ENCODE measurements at regions of chr3 and their contacts with region 1.

Region 1: GRCh38 chr3:155701882-155702465 is 42.9 kb downstream of the PLCH1 start:
- DNase-seq: no peak
- H3K4me3 ChIP-seq: no peak overlapping the region
- CTCF ChIP-seq: no peak
- POLR2A ChIP-seq: no peak

Region 2: DNA sequence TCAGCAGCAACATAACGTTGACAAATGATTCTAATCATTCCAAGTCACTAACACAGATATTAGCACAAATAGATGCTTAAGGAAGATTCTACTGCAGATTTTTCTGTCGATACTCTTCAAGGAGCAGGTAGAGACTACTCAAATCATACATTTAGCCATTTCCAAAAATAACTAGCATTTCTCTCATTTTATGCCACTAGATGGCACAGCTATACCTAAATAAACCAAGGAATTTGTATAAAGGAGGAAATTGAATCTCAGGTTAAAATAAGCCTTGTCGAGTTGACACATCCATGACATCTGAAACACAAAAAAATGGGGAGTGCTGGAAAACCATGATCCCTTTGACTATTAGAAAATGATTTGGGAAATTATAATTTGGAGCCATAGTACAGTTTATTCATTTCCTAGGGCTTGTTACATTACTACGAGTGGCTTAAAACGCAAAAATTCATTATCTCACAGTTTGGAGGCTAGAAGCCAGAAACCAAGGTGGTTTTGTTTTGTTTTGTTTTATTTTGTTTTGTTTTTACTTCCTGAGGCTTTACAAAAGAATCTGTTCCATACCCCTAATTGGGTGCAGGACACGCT is 349.0 kb before region 1 on chr3:
- intact Hi-C with region 1: loop called (anchors 2 kb)
- DNase-seq: no peak
- H3K4me3 ChIP-seq: no peak overlapping the region
- CTCF ChIP-seq: no peak
- POLR2A ChIP-seq: no peak

Measured in lower leg skin (tissue), 4 donors.